ENCODE measurements at regions of chr1 and their contacts with region 1.

Region 1: GRCh38 chr1:182910143-182910542 is 42.8 kb downstream of the SHCBP1L start:
- DNase-seq: no peak
- H3K27ac ChIP-seq: no peak overlapping the region
- CTCF ChIP-seq: no peak

Region 2: DNA sequence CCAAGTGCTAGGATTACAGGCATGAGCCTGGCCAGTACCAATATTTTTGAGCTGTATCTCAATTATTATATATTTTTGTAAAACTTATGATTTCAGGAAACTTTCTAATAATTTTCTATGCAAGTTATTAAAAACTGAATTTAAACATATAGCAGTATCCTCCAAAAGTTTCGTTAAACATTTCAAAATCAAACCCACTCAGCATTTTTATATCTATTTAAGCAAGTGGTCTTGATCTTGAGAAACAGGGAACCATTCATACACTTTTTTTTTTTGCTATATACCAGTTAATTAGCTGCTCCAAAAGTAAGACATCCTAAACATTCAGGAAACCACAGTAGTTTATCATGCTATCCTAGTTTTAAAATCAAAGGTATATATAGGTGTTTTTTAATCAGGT is 20.8 kb after region 1 on chr1:
- CTCF ChIA-PET with region 1: interaction called, 10 read pairs
- POLR2A ChIA-PET with region 1: no interaction called
- DNase-seq: no peak
- H3K27ac ChIP-seq: no peak overlapping the region
- CTCF ChIP-seq: no peak

Region 3: DNA sequence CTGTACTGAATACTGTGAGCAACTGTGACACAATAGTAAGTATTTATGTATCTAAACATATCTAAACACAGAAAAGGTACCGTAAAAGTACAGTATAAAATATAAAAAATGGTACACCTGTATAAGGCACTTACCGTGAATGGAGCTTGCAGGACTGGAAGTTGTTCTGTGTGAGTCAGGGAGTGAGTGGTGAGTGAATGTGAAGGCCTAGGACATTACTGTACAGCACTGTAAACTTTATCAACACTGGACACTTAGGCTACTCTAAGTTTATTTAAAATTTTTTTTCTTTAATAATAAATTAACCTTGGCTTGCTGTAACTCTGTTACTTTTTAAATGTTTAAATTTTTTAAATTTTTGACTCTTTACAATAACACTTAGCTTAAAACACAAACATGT is 67.3 kb after region 1 on chr1:
- CTCF ChIA-PET with region 1: no interaction called
- POLR2A ChIA-PET with region 1: no interaction called
- DNase-seq: no peak
- H3K27ac ChIP-seq: no peak overlapping the region
- CTCF ChIP-seq: no peak